ENCODE measurements at regions of chr14 and their contacts with region 1.

Region 1: DNA sequence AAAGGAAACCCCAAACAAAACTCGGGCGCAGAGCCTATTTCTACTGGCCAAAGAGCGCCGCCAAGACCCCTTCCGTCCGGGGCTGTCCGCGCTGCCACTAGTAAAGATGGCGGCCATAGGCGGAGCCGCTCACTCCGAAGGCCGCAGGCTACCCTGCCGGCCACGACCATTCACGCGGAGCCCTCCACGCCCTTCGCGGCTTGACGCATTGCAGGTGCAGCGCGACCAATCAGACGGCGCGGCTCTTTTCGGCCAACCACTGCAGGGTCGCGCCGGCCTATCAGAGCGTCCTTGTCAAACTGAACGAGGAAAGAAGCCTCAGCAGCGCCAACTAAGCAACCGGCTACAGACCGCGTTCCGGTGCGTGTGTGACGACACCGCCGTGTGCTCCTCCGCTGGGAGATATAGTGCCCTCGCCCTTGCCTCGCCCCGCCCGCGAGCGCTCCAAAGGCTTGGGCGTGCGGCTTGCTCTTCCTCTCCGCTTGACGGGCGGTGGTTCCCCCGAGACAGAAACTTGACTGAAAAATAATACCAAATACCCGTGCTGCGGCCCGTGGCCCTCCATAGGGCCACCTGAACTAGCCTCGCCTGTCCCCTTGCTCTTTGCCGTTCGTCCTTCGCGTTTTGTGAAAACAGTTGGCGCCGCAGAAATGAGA is 13.6 kb upstream of the CALM1 start:
- DNase-seq: peak; percentile 94 to 99 (median 97)
- ATAC-seq: peak; percentile 77
- H3K4me3 ChIP-seq: peak overlapping the region; percentile 88 to 90
- H3K4me3 Mint-ChIP-seq: no peak overlapping the region
- H3K27ac ChIP-seq: peak overlapping the region; percentile 99 to 100
- H3K27ac Mint-ChIP-seq: no peak overlapping the region
- H3K4me1 ChIP-seq: peaks cover 23% of the 10 kb centered on the region
- H3K4me1 Mint-ChIP-seq: peaks cover 28% of the 10 kb centered on the region
- H3K27me3 ChIP-seq: no peaks in the 10 kb centered on the region
- H3K27me3 Mint-ChIP-seq: no peaks in the 10 kb centered on the region
- CTCF ChIP-seq: no peak

Region 2: GRCh38 chr14:88551094-88551870 is 1831.9 kb before region 1 on chr14:
- CTCF ChIA-PET with region 1: no interaction called
- POLR2A ChIA-PET with region 1: no interaction called
- intact Hi-C with region 1: loop called in 1 of 2 experiments (anchors 10 kb)
- DNase-seq: peak in 7 of 9 experiments; percentile 23 to 71 (median 40)
- ATAC-seq: no peak
- H3K4me3 ChIP-seq: peak overlapping the region; percentile 36 to 47
- H3K4me3 Mint-ChIP-seq: peak overlapping the region; percentile 64
- H3K27ac ChIP-seq: no peak overlapping the region
- H3K27ac Mint-ChIP-seq: no peak overlapping the region
- H3K4me1 ChIP-seq: peaks cover 20% of the 10 kb centered on the region
- H3K4me1 Mint-ChIP-seq: peaks cover 11% of the 10 kb centered on the region
- H3K27me3 ChIP-seq: peaks cover 36 to 42% of the 10 kb centered on the region in 2 experiments
- H3K27me3 Mint-ChIP-seq: peaks cover 45% of the 10 kb centered on the region
- CTCF ChIP-seq: no peak

Region 3: DNA sequence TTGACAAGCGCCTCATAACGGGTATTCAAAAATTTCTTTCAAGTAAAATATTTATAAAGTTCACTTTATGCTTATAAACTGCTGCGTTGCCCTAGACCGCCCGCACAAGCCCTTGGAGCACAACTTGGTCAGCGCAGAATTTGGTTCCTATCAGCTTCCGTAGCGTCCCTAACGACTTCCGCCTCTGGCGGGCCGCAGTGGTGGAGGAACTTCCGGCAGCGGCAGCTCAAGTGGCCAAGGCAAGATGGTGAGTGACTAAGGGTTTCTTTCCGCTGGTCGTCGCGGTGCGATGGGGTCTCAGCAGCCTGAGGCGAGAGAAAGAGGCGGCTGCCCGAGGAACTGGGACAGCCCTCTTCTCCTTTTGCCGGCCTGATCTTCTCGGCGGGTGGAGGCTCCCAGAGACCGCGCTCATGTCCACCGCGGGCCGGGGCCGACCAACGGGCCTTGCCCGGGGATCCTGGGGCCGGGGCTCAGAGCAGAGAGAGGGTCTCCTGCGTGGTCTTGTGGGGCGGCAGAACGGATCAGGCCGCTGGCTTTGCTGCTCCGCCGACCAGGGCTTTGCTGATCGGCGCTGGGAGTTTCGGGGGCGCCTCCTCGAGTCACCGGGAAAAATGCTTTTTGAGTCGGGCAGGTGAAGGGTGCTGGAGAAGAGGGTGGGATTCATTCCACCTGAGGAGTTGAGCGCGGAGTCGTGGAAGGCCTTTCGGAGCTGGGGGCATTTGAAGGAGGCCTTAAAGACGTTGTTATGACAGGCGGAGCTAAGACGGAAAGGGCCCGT is 126.7 kb before region 1 on chr14 and contains the start of gene PSMC1:
- CTCF ChIA-PET with region 1: interaction called, 3 read pairs
- POLR2A ChIA-PET with region 1: interaction called, 8 read pairs
- intact Hi-C with region 1: loop called (anchors 1 to 5 kb)
- DNase-seq: peak; percentile 78 to 92 (median 85)
- ATAC-seq: peak; percentile 94
- H3K4me3 ChIP-seq: peak within 1 kb of the TSS; percentile 79 to 95
- H3K4me3 Mint-ChIP-seq: peak within 1 kb of the TSS; percentile 99
- H3K27ac ChIP-seq: peak within 1 kb of the TSS; percentile 73 to 80
- H3K27ac Mint-ChIP-seq: peak within 1 kb of the TSS; percentile 97
- H3K4me1 ChIP-seq: peaks cover 17% of the 10 kb centered on the region
- H3K4me1 Mint-ChIP-seq: peaks cover 32% of the 10 kb centered on the region
- H3K27me3 ChIP-seq: no peaks in the 10 kb centered on the region
- H3K27me3 Mint-ChIP-seq: peaks cover 7% of the 10 kb centered on the region
- CTCF ChIP-seq: no peak
- total RNA-seq, gene PSMC1: 76.8 to 85.0 TPM

Region 4: GRCh38 chr14:90368946-90369721 is 14.1 kb before region 1 on chr14:
- CTCF ChIA-PET with region 1: interaction called, 20 read pairs
- POLR2A ChIA-PET with region 1: interaction called, 11 read pairs
- intact Hi-C with region 1: loop called in 1 of 2 experiments (anchors 1 kb)
- DNase-seq: peak in 2 of 9 experiments; percentile 57 to 71
- ATAC-seq: peak; percentile 98
- H3K4me3 ChIP-seq: no peak overlapping the region
- H3K4me3 Mint-ChIP-seq: no peak overlapping the region
- H3K27ac ChIP-seq: no peak overlapping the region
- H3K27ac Mint-ChIP-seq: no peak overlapping the region
- H3K4me1 ChIP-seq: no peaks in the 10 kb centered on the region
- H3K4me1 Mint-ChIP-seq: no peaks in the 10 kb centered on the region
- H3K27me3 ChIP-seq: peaks cover 0 to 3% of the 10 kb centered on the region in 2 experiments
- H3K27me3 Mint-ChIP-seq: no peaks in the 10 kb centered on the region
- CTCF ChIP-seq: peak; percentile 80

Region 5: GRCh38 chr14:92106143-92106926 is 1723.1 kb after region 1 on chr14 and contains the start of gene ATXN3:
- CTCF ChIA-PET with region 1: no interaction called
- POLR2A ChIA-PET with region 1: no interaction called
- intact Hi-C with region 1: loop called in 1 of 2 experiments (anchors 5 kb)
- DNase-seq: peak; percentile 88 to 99 (median 95)
- ATAC-seq: peak; percentile 87
- H3K4me3 ChIP-seq: peak within 1 kb of the TSS; percentile 88 to 96
- H3K4me3 Mint-ChIP-seq: peak within 1 kb of the TSS; percentile 95
- H3K27ac ChIP-seq: peak within 1 kb of the TSS; percentile 77 to 95
- H3K27ac Mint-ChIP-seq: peak within 1 kb of the TSS; percentile 93
- H3K4me1 ChIP-seq: peaks cover 45% of the 10 kb centered on the region
- H3K4me1 Mint-ChIP-seq: peaks cover 58% of the 10 kb centered on the region
- H3K27me3 ChIP-seq: no peaks in the 10 kb centered on the region
- H3K27me3 Mint-ChIP-seq: no peaks in the 10 kb centered on the region
- CTCF ChIP-seq: peak; percentile 68
- total RNA-seq, gene ATXN3: 26.5 to 27.2 TPM

Measured in CD8-positive, alpha-beta T cell (primary cell).